ENCODE measurements at regions of chr16 and their contacts with region 1.

Region 1: DNA sequence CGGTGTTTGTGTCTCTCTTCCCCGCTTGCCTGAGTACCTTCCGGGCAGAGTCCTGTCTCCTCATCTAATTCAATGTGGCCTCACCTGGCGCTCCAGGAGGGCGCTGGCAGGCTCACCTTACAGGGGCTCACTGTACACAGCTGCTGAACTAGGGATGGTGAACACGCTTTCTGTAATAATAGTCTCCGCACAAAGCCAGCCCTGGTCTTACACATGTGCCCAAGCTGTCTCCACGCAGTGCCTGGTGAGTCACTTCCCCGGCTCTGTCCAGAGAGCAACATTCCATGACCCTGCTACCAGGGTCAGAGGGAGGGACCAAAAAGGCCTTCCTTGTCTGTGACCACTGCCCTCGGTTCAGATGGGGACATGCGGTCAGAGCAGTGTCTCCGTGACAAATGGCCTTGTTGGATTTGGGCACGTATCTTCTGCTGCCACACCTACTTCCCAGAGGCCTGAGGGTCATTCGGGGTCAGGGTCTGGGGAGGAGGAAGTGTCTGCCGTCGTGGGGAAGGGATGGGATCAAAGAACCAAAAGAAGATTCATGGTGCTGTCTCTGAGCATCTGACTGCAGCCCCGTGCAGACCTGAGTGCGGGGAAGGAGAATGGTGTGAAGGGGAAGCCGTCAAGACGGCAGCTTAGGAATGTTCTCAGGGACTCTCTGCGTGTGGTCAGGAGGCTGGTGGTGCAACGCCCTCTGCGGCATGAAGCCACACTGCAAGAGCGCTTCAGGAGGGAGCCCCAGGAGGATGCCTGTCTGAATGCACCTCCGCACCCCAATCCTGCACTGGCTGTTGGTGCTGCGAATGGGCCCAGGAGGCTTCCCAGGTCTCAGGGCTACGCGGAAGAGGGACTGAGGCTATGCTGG is 68.8 kb downstream of the IL21R start:
- DNase-seq: no peak

Region 2: GRCh38 chr16:26614237-26614841 is 856.5 kb before region 1 on chr16:
- in situ Hi-C with region 1: loop called (anchors 25 kb)
- DNase-seq: no peak

Region 3: DNA sequence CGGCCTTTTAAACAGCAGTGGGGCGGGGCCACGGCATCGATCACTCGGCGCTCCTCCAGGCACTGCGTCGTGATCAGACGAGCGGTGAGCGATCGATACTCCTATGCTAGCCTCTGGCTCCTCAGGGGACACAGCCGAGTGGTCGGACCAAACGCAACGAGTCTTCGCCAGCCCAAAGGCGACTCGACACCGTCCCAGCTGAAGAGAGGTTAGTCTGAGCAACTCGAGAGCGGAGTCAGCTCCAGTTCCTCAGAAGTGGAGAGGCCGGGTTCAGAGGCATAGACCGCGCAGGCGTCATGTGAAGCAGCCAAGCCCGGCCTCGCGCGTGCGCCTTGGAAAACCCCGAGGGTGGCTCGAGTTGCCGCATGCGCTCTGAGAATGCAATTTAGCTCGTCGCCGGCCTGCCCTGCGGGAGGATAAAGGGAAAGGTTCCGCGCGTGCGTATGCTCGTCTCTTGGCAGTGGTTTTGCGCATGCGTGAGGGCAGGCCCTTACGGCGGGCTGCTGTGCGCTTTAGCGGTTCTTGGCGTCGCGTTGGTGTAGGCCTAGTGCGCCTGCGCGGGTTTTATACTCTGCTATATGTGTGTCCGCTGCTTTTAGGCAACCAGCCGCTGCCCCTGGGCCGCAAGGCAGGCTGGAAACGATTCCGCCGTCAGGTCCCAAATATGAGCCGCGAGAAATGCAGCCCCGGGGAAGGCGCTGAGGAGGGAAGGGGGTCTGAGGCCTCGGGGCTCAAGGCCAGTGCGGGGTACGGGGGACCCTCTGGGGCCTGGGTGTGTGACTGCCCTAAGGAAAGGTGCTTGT is 267.2 kb before region 1 on chr16 and contains the start of gene KDM8:
- in situ Hi-C with region 1: no loop called
- DNase-seq: peak; percentile 98

Region 4: GRCh38 chr16:27529962-27530361 is 59.2 kb after region 1 on chr16:
- in situ Hi-C with region 1: loop called (anchors 10 kb)
- DNase-seq: no peak